ENCODE measurements at regions of chr7 and their contacts with region 1.

Region 1: GRCh38 chr7:80392229-80393169 is 119.4 kb downstream of the GNAT3 start:
- DNase-seq: peak; percentile 77
- ATAC-seq: peak; percentile 56
- H3K4me3 ChIP-seq: no peak overlapping the region
- H3K27ac ChIP-seq: no peak overlapping the region
- H3K4me1 ChIP-seq: no peaks in the 10 kb centered on the region
- H3K27me3 ChIP-seq: no peaks in the 10 kb centered on the region
- CTCF ChIP-seq: peak; percentile 68

Region 2: DNA sequence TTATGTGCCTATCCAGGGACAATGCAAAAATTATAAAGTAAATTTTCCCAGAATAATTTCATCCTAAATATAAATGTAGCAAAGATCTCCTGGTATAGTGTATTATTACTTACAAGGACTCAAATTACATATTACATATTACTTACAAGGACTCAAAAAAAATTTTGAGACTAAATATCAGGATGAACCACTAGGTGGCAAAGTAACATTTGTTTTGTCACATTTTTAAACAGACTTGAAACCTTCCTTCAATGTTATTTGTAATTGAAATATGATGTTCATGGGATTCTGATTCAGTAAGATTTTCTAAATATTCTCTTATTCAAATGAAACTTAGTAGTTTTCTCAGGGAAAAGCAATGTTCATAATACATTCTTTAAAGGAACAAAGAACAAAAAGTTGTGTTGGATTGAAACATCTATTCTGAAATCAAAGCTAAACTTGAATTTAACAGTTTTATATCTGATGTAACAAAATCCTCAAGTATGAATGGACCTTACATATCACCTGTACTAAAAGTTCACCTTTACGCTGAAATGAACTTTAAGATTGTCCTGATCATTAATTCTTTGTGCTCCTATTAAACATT is 332.2 kb before region 1 on chr7:
- CTCF ChIA-PET with region 1: interaction called, 3 read pairs
- POLR2A ChIA-PET with region 1: no interaction called
- intact Hi-C with region 1: loop called (anchors 1 kb)
- DNase-seq: peak; percentile 80
- ATAC-seq: peak; percentile 35; the same call in 1 of the 2 replicates
- H3K4me3 ChIP-seq: no peak overlapping the region
- H3K27ac ChIP-seq: no peak overlapping the region
- H3K4me1 ChIP-seq: no peaks in the 10 kb centered on the region
- H3K27me3 ChIP-seq: no peaks in the 10 kb centered on the region
- CTCF ChIP-seq: peak; percentile 68

Region 3: GRCh38 chr7:80095545-80095944 is 297.0 kb before region 1 on chr7:
- CTCF ChIA-PET with region 1: interaction called, 5 read pairs
- POLR2A ChIA-PET with region 1: no interaction called
- intact Hi-C with region 1: loop called (anchors 1 kb)
- DNase-seq: peak; percentile 45
- ATAC-seq: peak; percentile 56
- H3K4me3 ChIP-seq: no peak overlapping the region
- H3K27ac ChIP-seq: no peak overlapping the region
- H3K4me1 ChIP-seq: no peaks in the 10 kb centered on the region
- H3K27me3 ChIP-seq: no peaks in the 10 kb centered on the region
- CTCF ChIP-seq: peak; percentile 64

Region 4: GRCh38 chr7:80218723-80219122 is 173.8 kb before region 1 on chr7:
- CTCF ChIA-PET with region 1: no interaction called
- POLR2A ChIA-PET with region 1: no interaction called
- intact Hi-C with region 1: loop called (anchors 5 kb)
- DNase-seq: peak; percentile 91
- ATAC-seq: peak; percentile 93
- H3K4me3 ChIP-seq: no peak overlapping the region
- H3K27ac ChIP-seq: peak overlapping the region; percentile 55
- H3K4me1 ChIP-seq: peaks cover 15% of the 10 kb centered on the region
- H3K27me3 ChIP-seq: no peaks in the 10 kb centered on the region
- CTCF ChIP-seq: no peak

Region 5: DNA sequence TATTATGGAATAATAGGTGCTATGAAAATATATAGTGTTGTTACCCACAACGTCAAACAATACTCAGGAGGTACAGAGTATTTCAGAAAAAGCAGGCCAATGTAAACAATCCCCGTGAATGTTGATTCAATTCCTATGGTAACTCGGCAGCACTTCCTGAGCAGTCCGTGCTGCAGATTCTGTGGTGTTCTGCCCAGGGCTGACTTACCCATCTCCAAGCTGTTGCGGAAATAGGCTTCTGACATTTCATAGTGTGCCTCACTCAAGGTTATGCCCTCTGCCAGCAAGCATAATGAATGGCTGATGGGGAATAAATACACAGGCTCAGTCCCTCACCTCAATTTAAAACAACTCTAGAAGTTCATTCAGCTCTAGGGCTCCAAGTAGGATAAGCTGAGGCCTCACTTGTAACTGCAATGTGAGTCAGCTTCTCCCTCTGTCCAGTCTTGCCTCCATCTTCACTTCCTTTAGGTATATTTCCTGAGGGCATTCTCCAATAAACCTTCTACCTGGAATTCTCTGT is 80.3 kb before region 1 on chr7:
- CTCF ChIA-PET with region 1: interaction called, 4 read pairs
- POLR2A ChIA-PET with region 1: no interaction called
- intact Hi-C with region 1: loop called (anchors 2 kb)
- DNase-seq: peak; percentile 75
- ATAC-seq: peak; percentile 94
- H3K4me3 ChIP-seq: no peak overlapping the region
- H3K27ac ChIP-seq: peak overlapping the region; percentile 74
- H3K4me1 ChIP-seq: peaks cover 23% of the 10 kb centered on the region
- H3K27me3 ChIP-seq: no peaks in the 10 kb centered on the region
- CTCF ChIP-seq: no peak

Measured in PC-3 (cell line).